ENCODE measurements at regions of chr10 and their contacts with region 1.

Region 1: DNA sequence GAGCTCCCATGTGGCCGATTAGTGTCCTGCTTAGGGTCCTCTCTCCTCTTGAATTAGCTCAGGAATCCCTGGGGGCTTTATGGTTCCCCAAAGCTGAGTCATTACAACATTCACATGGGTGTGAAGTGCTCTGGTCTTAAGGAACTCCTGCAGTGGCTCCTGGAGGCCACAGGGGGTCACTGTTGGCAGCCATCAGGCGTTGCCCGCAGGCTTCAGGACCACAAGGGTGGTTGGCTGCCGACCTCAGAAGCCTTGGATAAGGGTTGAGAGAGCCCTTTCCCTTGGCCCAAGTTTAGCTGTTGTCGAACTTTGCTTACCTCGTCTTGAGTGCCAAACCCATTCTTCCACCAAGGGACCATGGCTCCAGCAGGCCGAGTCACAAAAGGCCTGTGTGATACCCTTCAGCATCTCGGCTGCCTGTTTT is 61.7 kb downstream of the SH2D4B start:
- DNase-seq: peak; percentile 79 to 85 (median 81)
- H3K4me3 ChIP-seq: no peak overlapping the region
- H3K27ac ChIP-seq: no peak overlapping the region
- H3K4me1 ChIP-seq: peaks cover 0 to 19% (median 0%) of the 10 kb centered on the region in 4 experiments
- H3K27me3 ChIP-seq: no peaks in the 10 kb centered on the region

Region 2: GRCh38 chr10:80588546-80588945 is 10.9 kb before region 1 on chr10:
- CTCF ChIA-PET with region 1: interaction called, 13 read pairs
- POLR2A ChIA-PET with region 1: no interaction called
- DNase-seq: no peak
- H3K4me3 ChIP-seq: no peak overlapping the region
- H3K27ac ChIP-seq: no peak overlapping the region
- H3K4me1 ChIP-seq: peaks cover 0 to 2% (median 0%) of the 10 kb centered on the region in 4 experiments
- H3K27me3 ChIP-seq: no peaks in the 10 kb centered on the region